ENCODE measurements at regions of chr10 and their contacts with region 1.

Region 1: DNA sequence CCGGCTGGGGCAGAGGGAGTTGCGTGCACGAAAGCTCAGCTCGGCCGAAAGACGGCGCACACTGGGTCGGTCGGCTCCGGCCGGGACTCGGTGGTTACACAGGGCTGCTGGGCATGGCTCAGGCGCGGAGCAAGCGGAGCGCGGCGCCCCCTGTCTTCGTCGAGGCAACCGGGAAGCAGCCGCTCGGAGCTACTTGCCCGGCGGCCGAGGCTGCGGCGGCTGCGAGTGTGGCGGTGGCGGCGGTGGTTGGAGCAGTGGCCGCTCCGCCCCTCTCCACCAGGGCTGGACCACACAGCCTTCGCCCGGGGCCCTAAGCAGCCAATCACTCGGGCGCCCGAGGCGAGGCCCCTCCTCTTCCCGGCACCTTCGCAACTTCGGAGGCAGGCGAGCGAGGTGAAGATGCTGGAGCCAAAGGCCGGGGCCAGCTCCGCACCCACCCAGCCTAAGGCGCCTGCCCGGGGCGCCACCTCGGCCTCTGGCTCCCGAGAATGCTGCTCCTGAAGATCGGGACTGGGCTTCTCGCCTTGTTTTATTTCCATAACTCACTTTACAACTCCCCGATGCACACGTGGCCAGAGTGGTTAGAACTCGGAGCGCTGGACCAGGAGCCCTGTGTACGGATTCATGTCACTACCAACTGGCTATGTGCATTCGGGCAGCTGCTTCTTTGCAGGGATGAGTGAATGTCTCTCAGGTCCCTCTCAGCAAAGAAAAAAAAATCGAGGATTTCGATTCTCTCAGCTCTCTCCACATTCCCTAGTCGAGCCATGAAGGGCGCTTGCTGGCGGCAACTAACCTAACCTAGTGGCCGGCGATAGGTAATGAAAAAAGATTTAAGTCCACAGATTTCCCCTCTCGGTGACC is at the start of gene TLL2:
- DNase-seq: peak; percentile 67
- H3K4me3 Mint-ChIP-seq: peak within 1 kb of the TSS; percentile 49
- H3K27ac Mint-ChIP-seq: no peak within 1 kb of the TSS
- H3K4me1 Mint-ChIP-seq: peaks cover 12% of the 10 kb centered on the region
- H3K27me3 Mint-ChIP-seq: peaks cover 46% of the 10 kb centered on the region
- total RNA-seq, gene TLL2: not detected

Region 2: GRCh38 chr10:96491299-96491698 is 22.6 kb before region 1 on chr10:
- CTCF ChIA-PET with region 1: interaction called, 13 read pairs
- POLR2A ChIA-PET with region 1: no interaction called
- DNase-seq: no peak
- H3K4me3 Mint-ChIP-seq: no peak overlapping the region
- H3K27ac Mint-ChIP-seq: no peak overlapping the region
- H3K4me1 Mint-ChIP-seq: no peaks in the 10 kb centered on the region
- H3K27me3 Mint-ChIP-seq: peaks cover 8% of the 10 kb centered on the region

Region 3: DNA sequence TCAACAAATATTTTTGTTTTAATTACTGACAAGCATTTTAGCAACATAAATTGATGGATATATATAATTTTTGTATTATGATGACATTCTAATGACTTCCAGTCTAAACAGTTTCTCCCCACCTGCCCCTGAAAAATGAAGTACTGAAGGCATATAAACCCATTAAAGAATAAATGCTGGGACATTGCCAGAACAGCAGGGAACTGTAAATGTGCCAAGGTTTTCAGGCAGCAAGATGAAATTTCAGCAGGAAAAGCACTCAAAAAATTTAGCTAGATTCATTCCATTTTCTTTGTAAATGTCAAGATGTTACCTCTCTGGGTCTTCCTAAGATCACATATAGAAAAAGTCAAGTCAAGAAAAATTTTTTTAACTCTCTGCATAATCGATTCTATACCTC is 10.8 kb after region 1 on chr10:
- CTCF ChIA-PET with region 1: interaction called, 10 read pairs
- POLR2A ChIA-PET with region 1: interaction called, 3 read pairs
- DNase-seq: no peak
- H3K4me3 Mint-ChIP-seq: no peak overlapping the region
- H3K27ac Mint-ChIP-seq: no peak overlapping the region
- H3K4me1 Mint-ChIP-seq: no peaks in the 10 kb centered on the region
- H3K27me3 Mint-ChIP-seq: no peaks in the 10 kb centered on the region

Region 4: DNA sequence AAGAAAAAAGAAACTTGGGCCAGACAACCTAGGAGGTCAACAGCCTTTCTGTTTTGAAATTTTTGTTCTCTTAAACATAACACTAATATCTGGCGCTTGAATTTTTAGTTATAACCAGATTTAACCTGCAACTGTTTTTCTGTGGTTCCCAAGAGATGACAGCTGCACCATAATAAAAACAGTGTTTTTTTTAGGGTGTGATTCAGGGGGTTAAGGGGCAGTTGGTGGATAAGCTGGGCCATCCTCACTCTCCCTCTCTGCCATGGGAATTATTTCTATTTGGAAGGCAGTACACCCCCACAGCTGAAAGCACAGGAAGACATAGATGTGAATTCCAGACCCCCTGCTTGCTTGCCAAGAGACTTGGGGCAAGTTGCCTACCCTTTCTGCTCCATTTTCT is 93.0 kb after region 1 on chr10:
- CTCF ChIA-PET with region 1: no interaction called
- POLR2A ChIA-PET with region 1: no interaction called
- DNase-seq: no peak
- H3K4me3 Mint-ChIP-seq: no peak overlapping the region
- H3K27ac Mint-ChIP-seq: no peak overlapping the region
- H3K4me1 Mint-ChIP-seq: peaks cover 9% of the 10 kb centered on the region
- H3K27me3 Mint-ChIP-seq: peaks cover 2% of the 10 kb centered on the region

Region 5: GRCh38 chr10:96618653-96619052 is 104.7 kb after region 1 on chr10:
- CTCF ChIA-PET with region 1: no interaction called
- POLR2A ChIA-PET with region 1: no interaction called
- DNase-seq: no peak
- H3K4me3 Mint-ChIP-seq: no peak overlapping the region
- H3K27ac Mint-ChIP-seq: no peak overlapping the region
- H3K4me1 Mint-ChIP-seq: no peaks in the 10 kb centered on the region
- H3K27me3 Mint-ChIP-seq: no peaks in the 10 kb centered on the region